GM12878 (cell line): ENCODE measurements at regions of chr5 and their contacts with region 1.

Region 1: DNA sequence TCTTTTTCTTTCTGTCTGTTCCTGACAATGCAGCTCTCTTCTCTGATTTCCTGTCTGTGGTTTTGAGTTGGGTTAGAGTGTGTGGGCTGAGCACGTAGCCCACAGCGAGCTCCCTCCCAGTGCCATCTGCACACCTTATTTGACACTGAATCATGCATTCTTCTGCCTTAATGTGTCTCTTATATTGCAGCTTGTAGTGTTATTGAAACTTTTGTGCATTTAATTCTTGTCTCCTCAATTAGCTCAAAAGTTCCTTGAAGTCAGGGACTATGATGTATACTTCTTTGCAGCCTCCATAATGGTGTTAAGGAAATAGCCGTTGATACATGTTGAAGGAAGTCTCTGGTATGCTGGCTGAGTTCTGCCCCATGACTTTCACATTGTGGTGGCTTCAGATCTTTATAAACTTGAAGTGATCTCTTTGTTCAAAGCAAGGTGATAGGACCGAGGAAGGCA is 576.2 kb upstream of the CLINT1 start:
- DNase-seq: peak; percentile 47
- ATAC-seq: peak; percentile 85
- H3K4me3 ChIP-seq: no peak overlapping the region
- H3K27ac ChIP-seq: no peak overlapping the region
- H3K4me1 ChIP-seq: peaks cover 20% of the 10 kb centered on the region
- H3K27me3 ChIP-seq: no peaks in the 10 kb centered on the region
- CTCF ChIP-seq: no peak
- EP300 ChIP-seq: no peak
- POLR2A ChIP-seq: no peak
- RAD21 ChIP-seq: no peak

Region 2: GRCh38 chr5:158364367-158364766 is 70.8 kb before region 1 on chr5:
- CTCF ChIA-PET with region 1: no interaction called
- POLR2A ChIA-PET with region 1: no interaction called
- RAD21 ChIA-PET with region 1: no interaction called
- SMC1A ChIA-PET with region 1: no interaction called
- in situ Hi-C with region 1: no loop called
- intact Hi-C with region 1: no loop called
- DNase-seq: no peak
- ATAC-seq: no peak
- H3K4me3 ChIP-seq: no peak overlapping the region
- H3K27ac ChIP-seq: no peak overlapping the region
- H3K4me1 ChIP-seq: no peaks in the 10 kb centered on the region
- H3K27me3 ChIP-seq: no peaks in the 10 kb centered on the region
- CTCF ChIP-seq: no peak
- EP300 ChIP-seq: no peak
- POLR2A ChIP-seq: no peak
- RAD21 ChIP-seq: no peak

Region 3: DNA sequence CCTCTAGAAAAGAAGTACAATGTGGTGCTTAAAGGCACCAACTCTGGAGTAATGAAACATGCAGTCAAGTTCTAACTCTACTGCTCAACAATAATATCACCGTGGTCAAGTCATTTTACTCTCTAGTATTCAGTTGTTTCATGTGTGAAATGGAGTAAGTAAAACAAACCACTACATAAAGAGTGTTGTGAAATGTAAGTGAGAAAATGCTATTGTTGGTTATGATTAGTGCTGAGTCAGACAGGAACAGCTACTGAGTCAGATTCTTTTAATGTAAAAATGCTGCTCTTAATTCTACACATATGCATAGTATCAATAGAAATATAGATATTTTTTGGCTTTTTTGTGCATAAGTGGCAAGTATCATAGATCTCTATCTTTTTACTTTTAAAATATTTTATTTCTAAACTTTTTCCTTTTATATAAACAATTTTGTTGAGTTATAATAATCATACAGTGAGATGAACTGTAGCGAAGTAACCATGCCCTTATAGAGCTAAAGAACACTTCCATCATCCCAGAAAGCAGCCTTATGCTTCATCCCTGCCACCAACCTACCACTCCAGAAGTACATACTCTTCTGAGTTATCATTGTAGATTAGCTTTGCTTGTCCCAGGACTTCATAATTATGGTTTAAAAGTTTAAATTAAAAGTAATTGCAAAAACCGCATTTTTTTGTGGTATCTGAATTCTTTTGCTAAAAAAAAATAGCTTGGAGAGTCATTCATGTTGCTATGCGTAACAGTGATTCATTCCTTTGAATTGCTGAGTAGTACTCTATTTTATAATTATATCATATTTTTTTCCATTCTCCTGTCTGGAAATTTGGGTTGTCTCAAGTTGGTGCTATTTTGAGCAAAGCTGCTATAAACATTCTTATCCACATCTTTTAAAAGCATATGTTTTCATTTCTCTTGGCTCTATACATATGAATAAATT is 28.0 kb before region 1 on chr5:
- CTCF ChIA-PET with region 1: interaction called, 9 read pairs
- POLR2A ChIA-PET with region 1: interaction called, 6 read pairs
- RAD21 ChIA-PET with region 1: interaction called, 34 read pairs
- SMC1A ChIA-PET with region 1: interaction called, 62 read pairs
- in situ Hi-C with region 1: no loop called
- intact Hi-C with region 1: no loop called
- DNase-seq: no peak
- ATAC-seq: peak; percentile 82
- H3K4me3 ChIP-seq: no peak overlapping the region
- H3K27ac ChIP-seq: no peak overlapping the region
- H3K4me1 ChIP-seq: peaks cover 5% of the 10 kb centered on the region; the same call in 1 of the 2 replicates
- H3K27me3 ChIP-seq: no peaks in the 10 kb centered on the region
- CTCF ChIP-seq: no peak
- EP300 ChIP-seq: peak in 1 of 2 experiments; percentile 29; a peak in 1 of 4 replicates
- POLR2A ChIP-seq: no peak
- RAD21 ChIP-seq: no peak

Region 4: GRCh38 chr5:158422653-158423515 is 12.3 kb before region 1 on chr5:
- CTCF ChIA-PET with region 1: interaction called, 8 read pairs
- POLR2A ChIA-PET with region 1: interaction called, 6 read pairs
- RAD21 ChIA-PET with region 1: no interaction called
- SMC1A ChIA-PET with region 1: interaction called, 31 read pairs
- in situ Hi-C with region 1: no loop called
- intact Hi-C with region 1: no loop called
- DNase-seq: no peak
- ATAC-seq: no peak
- H3K4me3 ChIP-seq: no peak overlapping the region
- H3K27ac ChIP-seq: no peak overlapping the region
- H3K4me1 ChIP-seq: no peaks in the 10 kb centered on the region
- H3K27me3 ChIP-seq: no peaks in the 10 kb centered on the region
- CTCF ChIP-seq: no peak
- EP300 ChIP-seq: no peak
- POLR2A ChIP-seq: no peak
- RAD21 ChIP-seq: no peak